ENCODE measurements at regions of chr22 and their contacts with region 1.

Region 1: GRCh38 chr22:35043252-35043931 is 22.6 kb upstream of the ISX start:
- DNase-seq: no peak
- H3K4me3 Mint-ChIP-seq: no peak overlapping the region
- H3K27ac Mint-ChIP-seq: no peak overlapping the region
- H3K4me1 Mint-ChIP-seq: no peaks in the 10 kb centered on the region
- H3K27me3 Mint-ChIP-seq: no peaks in the 10 kb centered on the region
- CTCF ChIP-seq: no peak

Region 2: DNA sequence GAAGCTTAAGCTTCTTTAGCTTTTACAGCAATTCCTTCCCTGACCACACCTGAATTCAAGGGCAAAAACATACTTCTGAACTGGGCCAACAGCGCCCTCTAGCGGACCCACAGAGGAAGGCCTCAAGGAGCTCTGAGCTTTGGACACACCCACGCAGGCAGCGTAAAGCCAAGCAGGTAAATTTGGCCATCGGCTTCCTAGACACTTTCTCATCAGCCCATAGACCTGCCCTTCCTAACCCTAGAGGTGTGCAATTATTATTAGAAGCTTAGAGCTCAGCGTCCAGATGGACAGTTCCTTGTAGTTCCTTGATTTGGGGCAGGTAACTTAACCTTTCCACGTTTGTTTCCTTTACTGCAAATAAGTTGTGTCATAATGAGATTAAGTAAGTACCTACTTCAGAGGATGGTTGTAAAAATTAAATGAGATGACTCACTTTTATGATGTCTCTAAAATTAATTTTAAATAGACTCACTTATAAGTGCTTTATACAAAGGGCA is 188.2 kb after region 1 on chr22:
- CTCF ChIA-PET with region 1: interaction called, 3 read pairs
- intact Hi-C with region 1: loop called (anchors 5 kb)
- DNase-seq: peak; percentile 82
- H3K4me3 Mint-ChIP-seq: no peak overlapping the region
- H3K27ac Mint-ChIP-seq: no peak overlapping the region
- H3K4me1 Mint-ChIP-seq: no peaks in the 10 kb centered on the region
- H3K27me3 Mint-ChIP-seq: peaks cover 77% of the 10 kb centered on the region
- CTCF ChIP-seq: peak; percentile 96

Region 3: DNA sequence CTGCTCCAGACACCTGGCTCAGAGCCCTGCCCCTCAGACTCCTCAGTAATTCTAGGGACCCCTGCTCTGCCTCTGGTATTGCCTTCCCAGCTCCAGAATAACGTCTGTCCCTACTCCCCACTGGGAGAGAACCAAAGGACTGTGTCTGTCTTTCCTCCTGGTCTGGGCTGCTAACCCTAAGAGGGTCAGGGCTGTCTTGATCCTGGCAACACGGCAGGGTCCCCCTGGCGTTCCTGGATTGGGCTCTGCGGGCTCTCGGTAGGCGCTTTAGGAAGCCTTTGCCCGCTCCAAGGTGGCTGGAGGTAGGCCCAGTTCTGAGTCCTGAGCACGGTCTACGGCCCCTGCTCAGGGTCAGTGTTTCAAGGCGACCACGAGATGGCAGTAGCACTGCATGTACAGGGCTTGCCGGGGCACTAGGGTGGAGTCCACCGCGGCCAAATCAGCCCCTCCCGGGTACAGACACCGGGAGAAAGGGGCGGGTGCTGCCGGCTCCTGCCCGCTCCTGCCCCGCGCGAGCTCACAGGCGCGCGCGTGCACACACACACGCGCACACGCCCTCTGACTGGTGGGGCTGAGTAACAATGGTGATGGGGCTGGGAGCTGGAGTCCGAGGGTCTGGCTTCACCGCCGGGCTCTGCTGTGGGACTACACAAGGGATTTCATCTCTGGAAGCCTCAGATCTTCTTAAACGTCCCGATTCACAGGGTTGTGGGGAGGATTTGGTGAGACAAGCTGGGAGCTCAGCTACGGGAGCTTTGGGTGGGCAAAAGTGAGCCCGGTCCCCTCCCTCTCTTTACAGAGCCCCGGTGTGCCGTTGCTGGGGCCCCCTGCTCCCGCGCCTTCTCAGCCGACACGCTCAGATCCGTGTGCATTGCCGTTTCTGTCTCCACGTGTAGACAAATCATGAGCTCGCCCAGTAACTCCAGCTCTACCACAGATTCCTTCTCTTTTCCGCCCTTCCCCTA is 307.4 kb after region 1 on chr22:
- CTCF ChIA-PET with region 1: no interaction called
- intact Hi-C with region 1: no loop called
- DNase-seq: peak; percentile 94
- H3K4me3 Mint-ChIP-seq: peak overlapping the region; percentile 96
- H3K27ac Mint-ChIP-seq: peak overlapping the region; percentile 57
- H3K4me1 Mint-ChIP-seq: peaks cover 20% of the 10 kb centered on the region
- H3K27me3 Mint-ChIP-seq: no peaks in the 10 kb centered on the region
- CTCF ChIP-seq: peak; percentile 93

Measured in Calu3 (cell line).